AG04449 (cell line): ENCODE measurements at regions of chr1 and their contacts with region 1.

Region 1: GRCh38 chr1:42173155-42173933 is 8.8 kb upstream of the GUCA2A start:
- DNase-seq: no peak
- H3K4me3 ChIP-seq: no peak overlapping the region
- CTCF ChIP-seq: peak; percentile 93

Region 2: DNA sequence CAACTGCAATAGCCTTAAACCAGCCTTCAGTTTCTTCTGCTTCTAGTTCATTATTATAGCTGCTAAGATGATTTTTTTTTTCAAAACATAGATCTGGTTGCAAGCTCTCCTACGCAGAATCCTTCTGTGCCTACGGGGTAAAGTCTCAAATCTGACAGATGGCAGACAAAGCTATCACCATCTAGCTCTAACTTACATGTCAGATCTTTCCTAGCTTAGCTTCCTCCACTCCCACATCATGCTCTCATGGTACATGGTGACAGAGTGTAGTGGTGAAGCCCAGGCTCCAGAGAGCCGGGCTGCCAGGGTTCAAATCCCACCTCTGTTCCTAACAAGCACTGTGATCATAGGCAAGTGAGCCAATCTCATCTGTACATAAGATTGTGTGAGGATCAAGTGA is 44.4 kb before region 1 on chr1:
- CTCF ChIA-PET with region 1: interaction called, 13 read pairs
- POLR2A ChIA-PET with region 1: no interaction called
- DNase-seq: no peak
- H3K4me3 ChIP-seq: no peak overlapping the region
- CTCF ChIP-seq: no peak

Region 3: GRCh38 chr1:42186152-42186551 is 12.8 kb after region 1 on chr1:
- CTCF ChIA-PET with region 1: interaction called, 24 read pairs
- POLR2A ChIA-PET with region 1: no interaction called
- DNase-seq: peak; percentile 38
- H3K4me3 ChIP-seq: no peak overlapping the region
- CTCF ChIP-seq: no peak

Region 4: DNA sequence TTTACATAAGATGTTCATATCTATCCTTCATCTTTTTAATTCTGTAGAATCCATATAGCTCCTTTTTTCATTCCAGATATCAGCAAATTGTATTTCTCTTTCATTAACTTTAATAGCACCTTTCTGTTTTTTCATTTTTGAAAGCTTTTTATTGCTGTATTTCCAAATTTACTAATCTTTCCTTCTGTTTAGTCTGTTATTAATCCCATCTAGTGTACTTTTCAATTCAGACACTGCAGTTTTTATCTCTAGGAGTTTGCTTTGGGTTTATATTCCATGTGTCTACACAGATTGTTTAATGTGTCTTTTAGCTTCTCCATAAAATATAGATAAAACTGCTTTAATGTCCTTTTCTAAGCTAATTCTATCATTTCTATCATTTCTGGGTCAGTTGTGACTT is 28.6 kb after region 1 on chr1:
- CTCF ChIA-PET with region 1: interaction called, 14 read pairs
- POLR2A ChIA-PET with region 1: no interaction called
- DNase-seq: no peak
- H3K4me3 ChIP-seq: no peak overlapping the region
- CTCF ChIP-seq: no peak

Region 5: GRCh38 chr1:42259739-42260064 is 86.4 kb after region 1 on chr1:
- CTCF ChIA-PET with region 1: interaction called, 10 read pairs
- POLR2A ChIA-PET with region 1: no interaction called
- DNase-seq: no peak
- H3K4me3 ChIP-seq: no peak overlapping the region
- CTCF ChIP-seq: no peak

Region 6: DNA sequence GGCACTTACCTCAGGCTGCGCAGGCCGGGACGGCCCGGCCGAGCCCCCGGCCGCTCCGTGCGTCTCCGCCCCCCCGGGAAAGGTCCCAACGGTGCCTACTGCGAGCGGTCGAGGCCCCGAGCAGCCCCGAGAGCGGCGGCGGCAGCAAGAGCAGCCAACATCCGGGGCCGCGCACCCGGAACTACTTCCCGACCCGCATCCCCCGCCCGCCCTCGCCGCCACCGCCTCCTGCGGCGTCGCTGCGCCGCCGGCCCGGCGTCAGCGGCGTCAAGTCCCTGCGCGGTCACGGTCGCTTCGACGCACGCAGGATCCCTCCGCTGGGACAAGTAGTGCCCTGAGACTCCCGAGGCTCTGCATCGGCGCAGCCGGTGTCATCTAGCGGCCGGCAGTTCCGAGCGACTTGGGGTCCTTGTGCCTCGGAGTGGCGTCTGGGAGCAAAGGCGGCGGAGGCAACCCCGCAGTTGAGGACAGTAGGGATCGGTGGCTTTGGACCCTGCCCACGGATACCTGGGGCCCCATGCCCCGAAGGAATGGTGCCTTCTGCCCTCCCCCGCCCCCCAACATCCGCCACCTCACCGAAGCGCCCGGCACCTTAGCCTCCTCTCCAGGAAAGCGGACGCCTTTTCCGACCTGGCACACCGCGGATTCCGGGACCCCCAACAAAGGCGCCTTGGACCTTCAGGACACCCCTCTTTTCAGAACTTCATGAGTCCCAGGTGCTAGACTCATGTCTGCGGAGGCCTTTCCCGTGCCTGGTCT is 161.9 kb after region 1 on chr1 and contains the start of gene FOXJ3:
- CTCF ChIA-PET with region 1: interaction called, 26 read pairs
- POLR2A ChIA-PET with region 1: no interaction called
- DNase-seq: peak; percentile 76
- H3K4me3 ChIP-seq: peak within 1 kb of the TSS; percentile 98
- CTCF ChIP-seq: no peak

Region 7: GRCh38 chr1:42368096-42368795 is 194.9 kb after region 1 on chr1:
- CTCF ChIA-PET with region 1: no interaction called
- POLR2A ChIA-PET with region 1: no interaction called
- DNase-seq: no peak
- H3K4me3 ChIP-seq: no peak overlapping the region
- CTCF ChIP-seq: no peak